Dorsolateral prefrontal cortex (tissue), 120 donors: ENCODE measurements at regions of chr4 and their contacts with region 1.

Region 1: DNA sequence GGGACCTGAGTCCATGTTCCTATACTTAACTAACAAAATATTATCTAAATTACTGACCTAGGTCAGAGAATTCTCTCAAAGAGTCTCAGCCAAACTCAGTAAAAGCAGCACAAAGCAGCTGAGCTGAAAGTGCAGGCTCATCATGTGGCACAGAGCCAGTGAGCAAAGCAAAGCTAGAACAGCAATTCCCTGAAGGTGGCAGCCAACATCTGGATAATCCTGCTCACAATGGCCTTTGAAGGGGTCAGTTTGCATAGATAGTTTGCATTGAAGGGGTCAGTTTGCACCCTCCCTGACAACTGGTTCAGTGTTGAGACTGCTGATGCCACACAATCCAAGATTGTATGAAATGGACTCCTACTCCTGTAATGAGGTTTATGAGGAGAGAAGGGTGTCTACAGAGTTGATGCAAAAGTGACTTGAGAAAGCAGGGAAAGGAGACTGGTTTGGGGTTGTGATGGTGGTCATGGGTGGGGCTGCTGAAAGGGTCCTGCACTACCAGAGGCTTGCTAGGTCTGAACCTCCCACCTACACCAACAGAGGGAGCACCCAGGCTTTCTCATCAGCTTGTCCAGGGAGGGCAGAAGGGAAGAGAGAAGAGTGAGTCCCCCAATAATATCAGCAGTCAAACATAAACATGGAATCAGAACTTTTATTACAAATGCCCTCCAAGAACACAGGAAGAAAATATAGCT is 39.7 kb downstream of the TRIM61 start:
- DNase-seq: peak in 7 of 10 donors; percentile 27 to 66 (median 48)
- H3K4me3 ChIP-seq: no peak overlapping the region
- H3K27ac ChIP-seq: no peak overlapping the region
- H3K27me3 ChIP-seq: peaks cover 0 to 4% (median 0%) of the 10 kb centered on the region in 45 donors
- CTCF ChIP-seq: peak in 30 of 56 donors; percentile 4 to 55 (median 23)

Region 2: GRCh38 chr4:164753872-164754488 is 183.7 kb before region 1 on chr4 and contains the start of gene SMIM31:
- intact Hi-C with region 1: no loop called
- DNase-seq: no peak
- H3K4me3 ChIP-seq: no peak within 1 kb of the TSS
- H3K27ac ChIP-seq: no peak within 1 kb of the TSS
- H3K27me3 ChIP-seq: peaks cover 0 to 2% (median 0%) of the 10 kb centered on the region in 45 donors
- CTCF ChIP-seq: no peak
- total RNA-seq, gene SMIM31: not detected

Region 3: GRCh38 chr4:164997324-164997723 is 59.6 kb after region 1 on chr4:
- intact Hi-C with region 1: loop called in 1 of 2 experiments (anchors 5 kb)
- DNase-seq: no peak
- H3K4me3 ChIP-seq: peak overlapping the region in 2 of 59 donors; percentile 2 to 52
- H3K27ac ChIP-seq: peak overlapping the region in 53 of 59 donors; percentile 1 to 95 (median 83)
- H3K27me3 ChIP-seq: peaks cover 0 to 3% (median 0%) of the 10 kb centered on the region in 45 donors
- CTCF ChIP-seq: peak in 25 of 56 donors; percentile 11 to 54 (median 32)